ENCODE measurements at regions of chr4 and their contacts with region 1.

Region 1: DNA sequence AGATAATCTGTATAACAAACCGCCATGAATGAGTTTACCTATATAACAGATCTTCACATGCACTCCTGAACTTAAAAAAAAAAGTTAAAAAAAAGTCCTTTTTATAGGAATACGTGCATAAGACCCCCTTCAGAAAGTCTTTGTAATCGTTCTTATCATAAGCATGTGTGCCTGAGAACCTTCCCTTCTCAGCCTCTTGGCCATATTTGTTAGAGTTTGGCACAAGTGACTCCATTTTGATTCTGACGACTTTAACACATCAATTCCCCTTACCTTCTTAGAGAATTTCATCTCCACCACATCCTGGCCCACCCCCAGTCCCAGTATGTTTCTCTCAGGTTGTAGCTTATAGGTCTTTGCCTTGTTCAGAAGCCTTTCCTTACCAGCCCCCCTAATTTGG is 16.0 kb upstream of the ANXA5 start:
- DNase-seq: no peak
- H3K4me3 Mint-ChIP-seq: no peak overlapping the region
- H3K27ac Mint-ChIP-seq: no peak overlapping the region
- H3K4me1 Mint-ChIP-seq: peaks cover 19% of the 10 kb centered on the region
- H3K27me3 Mint-ChIP-seq: peaks cover 52% of the 10 kb centered on the region

Region 2: DNA sequence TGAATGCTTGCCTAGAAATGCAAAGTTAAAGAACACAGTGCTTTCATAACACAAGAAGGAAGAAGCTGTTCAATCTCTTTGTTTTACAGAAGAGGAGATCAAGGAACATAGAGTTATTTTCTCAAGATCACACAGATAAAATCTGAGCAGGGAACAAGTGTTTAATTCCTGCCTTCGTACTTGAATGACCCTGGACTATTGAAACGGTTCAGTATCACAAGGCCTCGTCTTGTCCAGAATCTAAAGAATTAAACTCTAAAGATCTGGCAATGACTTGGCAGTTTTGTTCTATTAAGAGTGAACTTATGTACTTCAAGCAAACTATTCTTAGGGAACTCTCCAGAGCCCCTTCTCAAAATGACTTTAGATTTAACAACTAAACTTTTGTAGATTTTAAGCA is 113.7 kb before region 1 on chr4:
- CTCF ChIA-PET with region 1: no interaction called
- POLR2A ChIA-PET with region 1: interaction called, 10 read pairs
- DNase-seq: no peak
- H3K4me3 Mint-ChIP-seq: no peak overlapping the region
- H3K27ac Mint-ChIP-seq: no peak overlapping the region
- H3K4me1 Mint-ChIP-seq: peaks cover 3% of the 10 kb centered on the region
- H3K27me3 Mint-ChIP-seq: peaks cover 26% of the 10 kb centered on the region

Region 3: DNA sequence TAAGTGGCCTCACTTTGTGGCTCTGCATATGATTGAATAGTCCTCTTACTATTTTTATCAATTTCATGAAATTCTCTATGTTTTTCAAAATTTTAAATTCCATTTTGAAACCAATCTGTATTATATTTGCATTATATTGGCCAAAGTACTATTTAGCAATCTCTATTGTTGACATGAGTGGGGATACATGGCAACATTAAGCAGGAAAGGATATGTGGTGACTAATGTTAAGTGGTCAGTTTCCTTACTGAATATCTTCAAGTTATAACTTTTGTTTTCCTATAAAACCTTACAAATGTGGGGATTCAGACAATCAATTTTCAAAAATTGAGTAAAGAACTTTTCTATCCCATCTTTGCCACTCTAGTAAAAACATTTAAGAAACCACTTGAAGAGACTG is 147.3 kb after region 1 on chr4:
- CTCF ChIA-PET with region 1: no interaction called
- POLR2A ChIA-PET with region 1: no interaction called
- DNase-seq: no peak
- H3K4me3 Mint-ChIP-seq: no peak overlapping the region
- H3K27ac Mint-ChIP-seq: no peak overlapping the region
- H3K4me1 Mint-ChIP-seq: no peaks in the 10 kb centered on the region
- H3K27me3 Mint-ChIP-seq: no peaks in the 10 kb centered on the region